Astrocyte of the cerebellum (primary cell): ENCODE measurements at regions of chr7 and their contacts with region 1.

Region 1: GRCh38 chr7:12494687-12495024 is 75.9 kb upstream of the SCIN start:
- DNase-seq: no peak
- H3K4me3 ChIP-seq: no peak overlapping the region
- CTCF ChIP-seq: no peak

Region 2: GRCh38 chr7:12391922-12392615 is 102.6 kb before region 1 on chr7:
- in situ Hi-C with region 1: loop called (anchors 5 kb)
- DNase-seq: no peak
- H3K4me3 ChIP-seq: no peak overlapping the region
- CTCF ChIP-seq: no peak

Region 3: GRCh38 chr7:12436896-12437535 is 57.6 kb before region 1 on chr7:
- in situ Hi-C with region 1: no loop called
- DNase-seq: no peak
- H3K4me3 ChIP-seq: no peak overlapping the region
- CTCF ChIP-seq: peak; percentile 47

Region 4: GRCh38 chr7:12567015-12567414 is 72.4 kb after region 1 on chr7:
- in situ Hi-C with region 1: no loop called
- DNase-seq: no peak
- H3K4me3 ChIP-seq: no peak overlapping the region
- CTCF ChIP-seq: no peak

Region 5: DNA sequence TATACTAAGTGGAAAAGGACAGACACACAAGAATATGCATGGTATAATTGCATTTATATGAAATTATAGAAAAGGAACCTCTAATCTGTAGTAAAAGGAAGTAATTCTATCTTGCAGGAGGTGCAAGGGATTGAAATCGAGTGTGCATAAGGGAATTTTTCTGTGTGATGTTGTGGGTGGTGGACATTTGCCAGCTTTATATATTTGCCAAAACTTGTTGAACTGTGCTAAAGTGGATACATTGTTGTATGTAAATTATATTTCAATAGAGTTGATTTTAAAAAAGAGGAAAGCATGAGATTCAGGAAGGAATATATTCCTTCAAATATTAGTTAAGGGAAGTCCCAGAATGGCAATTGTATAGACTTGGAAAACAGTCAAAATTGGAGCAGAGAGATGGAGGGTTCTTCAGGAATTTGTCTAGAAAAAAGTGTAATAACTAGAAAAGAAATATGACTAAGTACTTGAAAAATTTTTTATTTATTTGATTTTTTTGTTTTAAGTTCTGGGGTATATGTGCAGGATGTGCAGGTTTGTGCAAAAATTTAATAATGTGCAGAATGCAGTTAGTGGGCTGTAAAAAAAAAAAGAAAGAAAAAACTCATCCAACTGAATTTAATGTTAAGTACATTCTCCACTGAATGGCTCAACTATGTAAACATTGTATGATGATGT is 288.9 kb after region 1 on chr7:
- in situ Hi-C with region 1: no loop called
- DNase-seq: peak; percentile 42
- H3K4me3 ChIP-seq: no peak overlapping the region
- CTCF ChIP-seq: no peak